AG04450 (cell line): ENCODE measurements at regions of chr1 and their contacts with region 1.

Region 1: GRCh38 chr1:12124693-12125421 is 41.9 kb upstream of the TNFRSF1B start:
- DNase-seq: peak; percentile 46
- H3K4me3 ChIP-seq: no peak overlapping the region
- H3K27ac ChIP-seq: no peak overlapping the region
- H3K27me3 ChIP-seq: peaks cover 8% of the 10 kb centered on the region
- CTCF ChIP-seq: peak; percentile 96

Region 2: DNA sequence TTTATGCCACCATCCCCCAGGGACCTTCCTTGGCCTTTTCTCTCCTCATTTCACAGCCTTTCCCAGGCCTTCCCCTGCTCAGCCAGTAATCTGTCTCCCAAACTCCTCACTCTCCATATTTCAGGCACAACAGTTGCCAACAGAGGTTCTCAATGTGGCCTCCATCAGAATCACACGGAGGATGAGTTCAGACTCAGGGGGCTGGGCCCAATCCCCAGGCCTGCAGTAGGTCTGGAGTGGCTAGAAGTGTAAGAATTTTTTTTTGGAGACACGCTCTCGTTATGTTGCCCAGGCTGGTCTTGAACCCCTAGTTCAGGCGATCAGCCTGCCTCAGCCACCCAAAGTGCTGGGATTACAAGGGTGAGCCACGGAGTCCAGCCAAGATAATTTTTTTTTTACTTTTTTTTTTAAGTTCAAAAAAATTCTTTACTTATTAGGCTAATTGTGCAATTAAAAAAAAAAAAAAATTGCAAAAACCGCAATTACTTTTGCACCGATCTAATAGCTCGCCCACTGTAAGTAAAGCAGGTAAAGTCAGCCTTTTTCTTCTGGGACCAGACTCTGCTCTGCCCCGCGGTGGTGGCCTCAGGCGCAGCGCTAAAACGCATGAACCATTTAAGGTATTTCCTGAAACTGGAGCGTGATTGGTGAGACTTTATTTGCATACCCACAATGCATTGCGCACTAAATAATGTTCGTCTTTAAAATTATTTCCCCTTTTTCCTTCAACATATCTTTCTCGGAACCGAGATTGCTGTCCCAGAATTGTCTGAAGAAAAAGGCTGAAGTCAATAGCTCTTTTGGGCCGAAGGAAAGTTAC is 217.4 kb before region 1 on chr1:
- CTCF ChIA-PET with region 1: interaction called, 10 read pairs
- POLR2A ChIA-PET with region 1: interaction called, 4 read pairs
- DNase-seq: peak; percentile 91
- H3K4me3 ChIP-seq: peak overlapping the region; percentile 18; the same call in 1 of the 2 replicates
- H3K27ac ChIP-seq: peak overlapping the region; percentile 99
- H3K27me3 ChIP-seq: no peaks in the 10 kb centered on the region
- CTCF ChIP-seq: peak; percentile 83

Region 3: GRCh38 chr1:12148160-12148957 is 23.5 kb after region 1 on chr1:
- CTCF ChIA-PET with region 1: interaction called, 11 read pairs
- POLR2A ChIA-PET with region 1: no interaction called
- DNase-seq: no peak
- H3K4me3 ChIP-seq: no peak overlapping the region
- H3K27ac ChIP-seq: no peak overlapping the region
- H3K27me3 ChIP-seq: no peaks in the 10 kb centered on the region
- CTCF ChIP-seq: no peak

Region 4: DNA sequence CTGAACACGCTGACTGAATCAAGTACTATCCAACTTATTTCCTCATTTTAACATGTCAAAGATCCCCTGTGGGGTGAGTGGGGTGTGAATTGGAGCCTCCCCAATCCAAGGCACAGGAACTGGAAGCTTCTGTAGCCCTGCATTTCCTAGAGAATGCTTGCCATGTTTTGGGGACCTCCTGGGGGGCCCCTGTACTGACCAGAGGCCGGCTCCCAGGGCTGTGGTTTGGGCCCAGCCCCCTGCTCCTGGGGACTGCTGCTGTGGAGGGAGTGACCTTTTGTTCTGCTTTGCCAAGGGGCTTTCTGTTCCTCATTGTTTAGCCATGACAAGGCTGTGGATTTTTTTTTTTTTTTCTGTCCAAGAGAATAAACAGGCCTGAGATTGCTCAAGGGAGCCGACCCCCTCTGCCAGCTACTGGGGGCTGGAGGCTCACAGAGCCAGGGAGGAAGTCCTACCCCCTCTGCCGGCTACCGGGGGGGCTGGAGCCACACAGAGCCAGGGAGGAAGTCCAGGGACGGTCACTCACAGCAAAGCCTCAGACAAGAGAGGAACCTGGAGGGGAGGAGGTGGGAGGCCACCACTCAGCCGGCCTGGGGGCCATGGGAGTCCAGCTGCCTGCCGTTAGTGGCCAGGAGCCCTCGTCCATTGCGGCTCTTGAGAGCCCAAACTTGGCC is 59.3 kb after region 1 on chr1:
- CTCF ChIA-PET with region 1: interaction called, 59 read pairs
- POLR2A ChIA-PET with region 1: interaction called, 4 read pairs
- DNase-seq: peak; percentile 66
- H3K4me3 ChIP-seq: no peak overlapping the region
- H3K27ac ChIP-seq: peak overlapping the region; percentile 92
- H3K27me3 ChIP-seq: no peaks in the 10 kb centered on the region
- CTCF ChIP-seq: peak; percentile 44

Region 5: GRCh38 chr1:12215118-12215961 is 90.5 kb after region 1 on chr1:
- CTCF ChIA-PET with region 1: interaction called, 237 read pairs
- POLR2A ChIA-PET with region 1: no interaction called
- DNase-seq: no peak
- H3K4me3 ChIP-seq: no peak overlapping the region
- H3K27ac ChIP-seq: no peak overlapping the region
- H3K27me3 ChIP-seq: peaks cover 30% of the 10 kb centered on the region
- CTCF ChIP-seq: no peak

Region 6: DNA sequence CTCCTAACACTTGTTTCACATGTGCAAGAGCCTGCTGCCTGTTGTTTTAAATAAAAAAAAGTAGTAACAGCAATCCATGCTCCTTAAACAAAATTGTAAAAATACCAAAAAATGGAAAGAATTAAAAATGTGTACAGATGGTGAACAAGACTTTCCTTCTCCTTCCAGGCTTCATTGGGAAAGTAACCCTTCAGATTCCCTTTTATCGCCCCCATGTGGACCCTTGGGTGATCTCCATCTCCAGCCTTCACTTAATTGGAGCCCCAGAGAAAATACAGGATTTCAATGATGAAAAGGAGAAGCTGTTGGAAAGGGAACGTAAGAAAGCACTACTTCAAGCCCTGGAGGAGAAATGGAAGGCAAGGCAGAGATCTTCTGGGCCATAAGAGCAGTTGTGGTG is 119.2 kb after region 1 on chr1:
- CTCF ChIA-PET with region 1: interaction called, 17 read pairs
- POLR2A ChIA-PET with region 1: interaction called, 5 read pairs
- DNase-seq: no peak
- H3K4me3 ChIP-seq: no peak overlapping the region
- H3K27ac ChIP-seq: no peak overlapping the region
- H3K27me3 ChIP-seq: no peaks in the 10 kb centered on the region
- CTCF ChIP-seq: peak; percentile 41